B cell (primary cell): ENCODE measurements at regions of chr5 and their contacts with region 1.

Region 1: GRCh38 chr5:151252762-151253604 is at the start of gene GM2A:
- DNase-seq: peak; percentile 99
- ATAC-seq: peak; percentile 83
- H3K4me3 ChIP-seq: peak within 1 kb of the TSS; percentile 74 to 96 (median 89)
- H3K4me3 Mint-ChIP-seq: peak within 1 kb of the TSS; percentile 95
- H3K27ac ChIP-seq: peak within 1 kb of the TSS; percentile 70 to 90
- H3K27ac Mint-ChIP-seq: peak within 1 kb of the TSS; percentile 88
- H3K4me1 ChIP-seq: peaks cover 48 to 54% of the 10 kb centered on the region in 2 donors
- H3K4me1 Mint-ChIP-seq: peaks cover 52% of the 10 kb centered on the region
- H3K27me3 ChIP-seq: no peaks in the 10 kb centered on the region
- H3K27me3 Mint-ChIP-seq: no peaks in the 10 kb centered on the region
- CTCF ChIP-seq: no peak
- total RNA-seq, gene GM2A: 82.7 and 89.3 TPM in 2 replicates

Region 2: GRCh38 chr5:149551200-149552037 is 1701.6 kb before region 1 on chr5 and contains the start of gene CSNK1A1:
- CTCF ChIA-PET with region 1: no interaction called
- POLR2A ChIA-PET with region 1: no interaction called
- intact Hi-C with region 1: loop called (anchors 2 kb)
- DNase-seq: peak; percentile 99
- ATAC-seq: peak; percentile 84
- H3K4me3 ChIP-seq: peak within 1 kb of the TSS; percentile 93 to 99 (median 97)
- H3K4me3 Mint-ChIP-seq: peak within 1 kb of the TSS; percentile 97
- H3K27ac ChIP-seq: peak within 1 kb of the TSS; percentile 87 to 97
- H3K27ac Mint-ChIP-seq: peak within 1 kb of the TSS; percentile 99
- H3K4me1 ChIP-seq: peaks cover 20 to 27% of the 10 kb centered on the region in 2 donors
- H3K4me1 Mint-ChIP-seq: peaks cover 35% of the 10 kb centered on the region
- H3K27me3 ChIP-seq: no peaks in the 10 kb centered on the region
- H3K27me3 Mint-ChIP-seq: no peaks in the 10 kb centered on the region
- CTCF ChIP-seq: peak; percentile 74
- total RNA-seq, gene CSNK1A1: 168 TPM in 2 replicates

Region 3: DNA sequence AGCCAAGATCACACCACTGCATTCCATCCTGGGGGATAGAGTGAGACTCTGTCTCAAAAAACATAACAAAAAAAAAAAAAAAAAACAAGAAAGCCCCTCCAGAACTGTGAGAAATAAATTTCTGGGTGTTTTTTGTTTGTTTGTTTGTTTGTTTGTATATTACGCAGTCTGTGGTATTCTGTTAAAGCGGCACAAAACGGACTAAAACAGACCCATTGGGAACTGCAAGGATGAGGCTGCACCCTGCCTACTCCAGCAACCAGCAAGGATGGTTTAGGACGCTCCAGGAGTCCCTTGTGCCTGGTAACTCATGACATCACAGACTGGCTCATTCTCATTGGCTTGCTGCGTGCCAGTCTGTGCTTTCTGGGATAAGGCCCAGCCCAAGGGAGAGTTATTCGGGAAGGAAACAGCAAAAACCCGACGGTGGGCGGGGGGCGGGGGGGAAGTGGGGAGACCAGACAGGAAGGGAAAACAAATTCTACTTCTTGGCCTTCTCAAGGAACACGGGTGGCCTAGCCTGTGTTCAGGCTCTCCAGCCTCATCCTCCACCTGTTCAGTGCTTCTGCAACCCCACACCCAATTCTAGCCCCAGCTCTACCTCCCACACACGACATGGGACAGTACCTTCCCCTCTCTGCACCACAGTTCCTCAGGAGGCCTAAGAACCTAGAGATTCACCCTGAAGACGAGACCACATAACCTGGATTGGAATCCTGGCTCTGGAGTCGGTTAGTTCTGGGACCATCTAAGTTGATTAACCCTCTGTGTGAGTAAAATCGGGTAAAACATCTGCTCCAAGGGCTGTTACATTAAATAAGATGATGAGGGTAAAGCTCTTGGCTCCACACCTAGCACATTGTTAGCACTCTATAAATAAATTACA is 843.1 kb before region 1 on chr5:
- CTCF ChIA-PET with region 1: no interaction called
- POLR2A ChIA-PET with region 1: interaction called, 4 read pairs
- intact Hi-C with region 1: loop called (anchors 2 kb)
- DNase-seq: peak; percentile 81
- ATAC-seq: peak; percentile 4
- H3K4me3 ChIP-seq: peak overlapping the region; percentile 78 to 100 (median 94)
- H3K4me3 Mint-ChIP-seq: peak overlapping the region; percentile 95
- H3K27ac ChIP-seq: peak overlapping the region; percentile 99 to 100
- H3K27ac Mint-ChIP-seq: peak overlapping the region; percentile 99
- H3K4me1 ChIP-seq: peaks cover 52 to 66% of the 10 kb centered on the region in 2 donors
- H3K4me1 Mint-ChIP-seq: peaks cover 68% of the 10 kb centered on the region
- H3K27me3 ChIP-seq: no peaks in the 10 kb centered on the region
- H3K27me3 Mint-ChIP-seq: no peaks in the 10 kb centered on the region
- CTCF ChIP-seq: no peak

Region 4: DNA sequence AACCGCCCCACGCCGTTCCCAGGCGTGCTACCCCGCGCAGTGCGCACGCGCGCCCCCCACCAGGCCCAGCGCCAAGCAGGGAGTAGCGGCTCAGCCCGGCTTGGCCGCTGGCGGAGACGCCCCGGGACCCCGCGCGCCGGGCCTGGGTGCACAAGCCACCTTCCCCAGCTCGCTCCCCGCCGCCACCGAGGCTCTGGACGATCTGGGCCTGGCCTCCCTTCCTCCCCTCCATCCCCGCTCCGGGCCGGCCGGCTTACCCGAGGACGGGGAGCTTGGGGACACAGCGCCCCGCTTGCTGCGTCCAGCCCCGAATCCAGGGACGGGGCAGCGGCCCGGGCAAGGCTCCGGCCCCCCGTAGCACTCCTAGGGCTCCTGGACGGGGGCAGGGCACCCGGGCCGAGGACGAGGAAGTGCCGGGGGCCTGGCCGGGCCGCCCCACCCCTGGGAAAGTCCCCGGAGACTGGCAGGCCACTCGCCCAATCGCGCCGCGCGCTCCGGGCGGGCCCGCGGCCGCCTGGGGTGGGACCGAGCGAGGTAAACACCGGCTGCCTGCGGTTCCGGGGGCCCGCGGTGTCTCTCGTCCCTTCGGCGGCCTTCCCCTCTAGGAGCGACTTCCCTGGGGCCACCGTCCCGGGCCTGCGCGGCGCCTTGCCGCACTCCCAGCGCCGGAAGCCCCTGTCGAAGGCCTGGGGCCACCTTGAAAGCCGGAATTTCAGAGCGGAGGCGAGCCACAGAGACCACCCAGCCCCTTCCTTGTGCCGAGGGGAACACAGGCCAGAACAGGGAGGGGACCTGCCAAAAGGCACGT is 172.2 kb before region 1 on chr5 and contains the start of gene TNIP1:
- CTCF ChIA-PET with region 1: interaction called, 4 read pairs
- POLR2A ChIA-PET with region 1: interaction called, 4 read pairs
- intact Hi-C with region 1: loop called (anchors 2 kb)
- DNase-seq: peak; percentile 96
- ATAC-seq: peak; percentile 88
- H3K4me3 ChIP-seq: peak within 1 kb of the TSS; percentile 71 to 96 (median 85)
- H3K4me3 Mint-ChIP-seq: peak within 1 kb of the TSS; percentile 87
- H3K27ac ChIP-seq: peak within 1 kb of the TSS; percentile 96 to 100
- H3K27ac Mint-ChIP-seq: peak within 1 kb of the TSS; percentile 88
- H3K4me1 ChIP-seq: peaks cover 83 to 84% of the 10 kb centered on the region in 2 donors
- H3K4me1 Mint-ChIP-seq: peaks cover 82% of the 10 kb centered on the region
- H3K27me3 ChIP-seq: no peaks in the 10 kb centered on the region
- H3K27me3 Mint-ChIP-seq: no peaks in the 10 kb centered on the region
- CTCF ChIP-seq: no peak
- total RNA-seq, gene TNIP1: 294 and 295 TPM in 2 replicates

Region 5: DNA sequence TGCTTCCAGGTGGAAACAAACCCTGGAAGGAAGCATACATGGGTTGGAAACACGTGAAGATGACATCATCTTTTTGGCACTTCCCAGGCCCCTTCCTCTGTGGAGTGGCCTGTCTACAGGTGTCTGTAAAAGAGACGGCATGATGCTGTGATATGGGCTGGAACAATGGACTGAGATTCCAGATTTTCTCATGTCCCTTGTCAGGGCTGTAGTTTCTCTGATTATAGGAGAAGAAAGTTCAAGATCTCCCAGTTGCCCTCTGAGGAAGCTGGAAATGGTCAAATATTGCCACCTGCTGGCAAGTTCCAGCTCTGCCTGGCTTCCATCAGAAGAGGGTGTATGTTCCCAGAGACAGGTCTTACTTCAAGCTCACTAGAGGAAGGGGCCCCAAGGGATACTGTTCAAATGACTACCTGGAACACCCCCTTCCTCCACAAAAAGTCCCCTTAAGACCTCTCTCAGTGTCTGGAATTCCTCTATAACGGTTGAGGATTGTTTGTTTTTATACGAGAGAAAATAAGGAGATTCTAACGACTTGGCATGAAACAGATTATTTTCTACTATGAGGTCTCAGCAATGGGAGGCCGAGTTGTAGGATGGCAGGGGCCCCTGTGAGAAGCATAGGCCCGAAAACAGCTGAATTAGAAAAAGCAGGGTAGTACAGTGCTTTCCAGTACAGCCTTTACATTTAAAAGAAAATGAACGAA is 88.1 kb before region 1 on chr5:
- CTCF ChIA-PET with region 1: interaction called, 13 read pairs
- POLR2A ChIA-PET with region 1: no interaction called
- intact Hi-C with region 1: no loop called
- DNase-seq: peak; percentile 89
- ATAC-seq: peak; percentile 97
- H3K4me3 ChIP-seq: no peak overlapping the region
- H3K4me3 Mint-ChIP-seq: no peak overlapping the region
- H3K27ac ChIP-seq: no peak overlapping the region
- H3K27ac Mint-ChIP-seq: peak overlapping the region; percentile 72
- H3K4me1 ChIP-seq: peaks cover 21 to 28% of the 10 kb centered on the region in 2 donors
- H3K4me1 Mint-ChIP-seq: peaks cover 36% of the 10 kb centered on the region
- H3K27me3 ChIP-seq: no peaks in the 10 kb centered on the region
- H3K27me3 Mint-ChIP-seq: no peaks in the 10 kb centered on the region
- CTCF ChIP-seq: peak; percentile 95

Region 6: GRCh38 chr5:151213800-151214613 is 39.0 kb before region 1 on chr5:
- CTCF ChIA-PET with region 1: interaction called, 7 read pairs
- POLR2A ChIA-PET with region 1: interaction called, 53 read pairs
- intact Hi-C with region 1: loop called (anchors 1 kb)
- DNase-seq: peak; percentile 92
- ATAC-seq: peak; percentile 74
- H3K4me3 ChIP-seq: peak overlapping the region; percentile 35 to 58 (median 38)
- H3K4me3 Mint-ChIP-seq: peak overlapping the region; percentile 79
- H3K27ac ChIP-seq: peak overlapping the region; percentile 96 to 99
- H3K27ac Mint-ChIP-seq: peak overlapping the region; percentile 99
- H3K4me1 ChIP-seq: peaks cover 98 to 100% of the 10 kb centered on the region in 2 donors
- H3K4me1 Mint-ChIP-seq: peaks cover 90% of the 10 kb centered on the region
- H3K27me3 ChIP-seq: no peaks in the 10 kb centered on the region
- H3K27me3 Mint-ChIP-seq: no peaks in the 10 kb centered on the region
- CTCF ChIP-seq: no peak

Region 7: GRCh38 chr5:151270599-151270998 is 17.6 kb after region 1 on chr5:
- CTCF ChIA-PET with region 1: no interaction called
- POLR2A ChIA-PET with region 1: interaction called, 3 read pairs
- intact Hi-C with region 1: loop called (anchors 2 kb)
- DNase-seq: peak; percentile 37
- ATAC-seq: peak; percentile 66
- H3K4me3 ChIP-seq: no peak overlapping the region
- H3K4me3 Mint-ChIP-seq: no peak overlapping the region
- H3K27ac ChIP-seq: peak overlapping the region in 1 of 2 donors; percentile 12
- H3K27ac Mint-ChIP-seq: no peak overlapping the region
- H3K4me1 ChIP-seq: no peaks in the 10 kb centered on the region
- H3K4me1 Mint-ChIP-seq: no peaks in the 10 kb centered on the region
- H3K27me3 ChIP-seq: no peaks in the 10 kb centered on the region
- H3K27me3 Mint-ChIP-seq: no peaks in the 10 kb centered on the region
- CTCF ChIP-seq: no peak